ENCODE measurements at regions of chr20 and their contacts with region 1.

Region 1: DNA sequence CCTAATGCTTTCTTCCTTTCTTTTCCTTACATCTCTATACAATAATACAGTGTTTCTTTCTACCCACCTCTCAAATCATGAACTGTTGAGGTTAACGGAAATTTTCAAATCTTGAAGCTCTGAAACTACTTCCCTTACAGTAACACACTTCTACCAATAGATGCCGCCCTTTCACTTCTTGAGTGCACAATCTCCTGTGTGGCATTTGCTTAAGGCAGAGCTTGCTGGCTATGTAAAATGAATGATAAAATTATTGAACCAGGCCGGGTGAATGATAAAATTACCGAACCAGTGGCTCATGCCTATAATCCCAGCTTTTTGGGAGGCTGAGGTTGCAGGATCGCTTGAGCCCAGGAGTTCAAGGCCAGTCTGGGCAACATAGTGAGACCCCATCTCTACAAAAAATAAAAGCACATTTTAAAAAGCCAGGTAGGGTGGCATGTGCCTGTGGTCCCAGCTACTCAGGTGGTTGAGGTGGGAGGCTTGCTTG is 56.8 kb downstream of the KCNS1 start:
- DNase-seq: peak; percentile 82
- H3K4me3 ChIP-seq: no peak overlapping the region
- H3K27ac ChIP-seq: no peak overlapping the region
- H3K4me1 ChIP-seq: peaks cover 19% of the 10 kb centered on the region
- H3K27me3 ChIP-seq: no peaks in the 10 kb centered on the region
- CTCF ChIP-seq: peak; percentile 72 to 77
- POLR2A ChIP-seq: no peak

Region 2: GRCh38 chr20:44733341-44734069 is 310.6 kb before region 1 on chr20:
- CTCF ChIA-PET with region 1: no interaction called
- POLR2A ChIA-PET with region 1: no interaction called
- dilution Hi-C with region 1: no loop called
- intact Hi-C with region 1: no loop called
- DNase-seq: peak; percentile 74
- H3K4me3 ChIP-seq: no peak overlapping the region
- H3K27ac ChIP-seq: no peak overlapping the region
- H3K4me1 ChIP-seq: peaks cover 12% of the 10 kb centered on the region
- H3K27me3 ChIP-seq: no peaks in the 10 kb centered on the region
- CTCF ChIP-seq: peak; percentile 84 to 92
- POLR2A ChIP-seq: no peak

Region 3: DNA sequence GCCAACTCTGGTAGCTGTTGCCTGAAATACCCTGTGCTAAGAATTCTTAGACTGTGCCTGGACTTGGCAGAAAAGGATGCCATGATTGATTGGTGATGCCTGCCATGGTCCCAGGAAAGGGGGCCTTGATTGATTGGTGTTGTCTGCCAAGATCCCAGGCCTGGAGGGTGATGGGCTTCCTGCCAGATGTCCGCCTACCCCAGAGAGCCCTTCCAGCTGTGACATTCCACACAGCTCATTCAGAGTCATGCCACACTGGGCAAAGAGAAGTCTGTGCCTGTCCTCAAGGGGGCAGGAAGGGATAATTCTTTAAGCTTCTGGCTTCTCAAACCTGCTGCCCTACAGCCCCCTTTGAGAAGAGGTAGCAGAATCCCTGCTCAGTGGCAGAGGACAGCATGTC is 258.4 kb before region 1 on chr20:
- CTCF ChIA-PET with region 1: no interaction called
- POLR2A ChIA-PET with region 1: no interaction called
- dilution Hi-C with region 1: no loop called
- intact Hi-C with region 1: no loop called
- DNase-seq: no peak
- H3K4me3 ChIP-seq: no peak overlapping the region
- H3K27ac ChIP-seq: no peak overlapping the region
- H3K4me1 ChIP-seq: no peaks in the 10 kb centered on the region
- H3K27me3 ChIP-seq: peaks cover 0 to 2% of the 10 kb centered on the region in 2 experiments
- CTCF ChIP-seq: no peak
- POLR2A ChIP-seq: no peak

Region 4: DNA sequence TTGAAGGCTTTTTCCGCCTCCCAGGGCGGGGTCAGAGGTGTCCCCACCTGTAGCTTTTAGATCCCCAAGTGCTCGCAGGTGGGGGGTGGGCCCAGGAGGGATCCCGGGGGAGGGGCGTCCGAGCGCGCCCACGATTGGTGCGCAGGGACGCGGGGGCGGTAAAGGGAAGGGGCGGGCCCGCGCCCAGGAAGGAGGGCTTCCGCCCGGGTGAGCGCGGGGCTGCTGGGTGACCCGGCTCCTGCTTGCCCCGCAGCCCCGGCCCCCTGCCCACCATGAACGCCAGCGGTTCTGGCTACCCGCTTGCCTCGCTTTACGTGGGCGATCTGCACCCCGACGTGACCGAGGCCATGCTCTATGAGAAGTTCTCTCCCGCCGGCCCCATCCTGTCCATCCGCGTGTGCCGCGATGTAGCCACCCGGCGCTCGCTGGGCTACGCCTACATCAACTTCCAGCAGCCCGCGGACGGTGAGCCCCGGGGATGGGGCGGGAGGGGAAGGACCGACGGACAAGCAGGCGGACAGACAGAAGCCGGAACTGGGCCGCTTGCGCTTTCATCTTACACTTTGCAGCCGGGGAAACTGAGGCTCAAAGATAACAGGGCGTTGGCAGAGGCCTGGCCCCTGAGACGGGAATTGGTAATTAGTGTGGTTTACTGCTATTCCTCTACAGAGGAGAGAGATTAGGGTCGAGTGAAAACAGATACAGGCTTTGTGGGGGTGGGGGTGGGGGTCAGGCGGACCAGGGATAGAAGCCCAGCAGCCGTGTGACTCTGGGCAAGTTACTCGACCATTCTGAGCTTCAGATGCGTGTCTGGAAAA is 134.0 kb before region 1 on chr20 and contains the start of gene PABPC1L:
- CTCF ChIA-PET with region 1: no interaction called
- POLR2A ChIA-PET with region 1: no interaction called
- dilution Hi-C with region 1: no loop called
- intact Hi-C with region 1: loop called (anchors 1 kb)
- DNase-seq: no peak
- H3K4me3 ChIP-seq: peak within 1 kb of the TSS; percentile 43 to 62 (median 51)
- H3K27ac ChIP-seq: no peak within 1 kb of the TSS
- H3K4me1 ChIP-seq: peaks cover 12% of the 10 kb centered on the region
- H3K27me3 ChIP-seq: no peaks in the 10 kb centered on the region
- CTCF ChIP-seq: no peak
- POLR2A ChIP-seq: peak; percentile 47
- total RNA-seq, gene PABPC1L: 7.5 and 7.8 TPM in 2 replicates

Region 5: GRCh38 chr20:44945261-44945660 is 98.9 kb before region 1 on chr20:
- CTCF ChIA-PET with region 1: no interaction called
- POLR2A ChIA-PET with region 1: no interaction called
- dilution Hi-C with region 1: no loop called
- intact Hi-C with region 1: no loop called
- DNase-seq: no peak
- H3K4me3 ChIP-seq: no peak overlapping the region
- H3K27ac ChIP-seq: no peak overlapping the region
- H3K4me1 ChIP-seq: no peaks in the 10 kb centered on the region
- H3K27me3 ChIP-seq: no peaks in the 10 kb centered on the region
- CTCF ChIP-seq: no peak
- POLR2A ChIP-seq: no peak

Region 6: GRCh38 chr20:44993343-44993742 is 50.8 kb before region 1 on chr20:
- CTCF ChIA-PET with region 1: interaction called, 7 read pairs
- POLR2A ChIA-PET with region 1: no interaction called
- dilution Hi-C with region 1: no loop called
- intact Hi-C with region 1: loop called (anchors 1 kb)
- DNase-seq: peak; percentile 65
- H3K4me3 ChIP-seq: peak overlapping the region in 1 of 3 experiments; percentile 23
- H3K27ac ChIP-seq: peak overlapping the region; percentile 82
- H3K4me1 ChIP-seq: peaks cover 17% of the 10 kb centered on the region
- H3K27me3 ChIP-seq: no peaks in the 10 kb centered on the region
- CTCF ChIP-seq: no peak
- POLR2A ChIP-seq: peak; percentile 26

Region 7: GRCh38 chr20:45061244-45061643 is 17.1 kb after region 1 on chr20:
- CTCF ChIA-PET with region 1: interaction called, 46 read pairs
- POLR2A ChIA-PET with region 1: no interaction called
- dilution Hi-C with region 1: no loop called
- intact Hi-C with region 1: no loop called
- DNase-seq: peak; percentile 61
- H3K4me3 ChIP-seq: no peak overlapping the region
- H3K27ac ChIP-seq: no peak overlapping the region
- H3K4me1 ChIP-seq: peaks cover 13% of the 10 kb centered on the region
- H3K27me3 ChIP-seq: no peaks in the 10 kb centered on the region
- CTCF ChIP-seq: no peak
- POLR2A ChIP-seq: no peak

Region 8: DNA sequence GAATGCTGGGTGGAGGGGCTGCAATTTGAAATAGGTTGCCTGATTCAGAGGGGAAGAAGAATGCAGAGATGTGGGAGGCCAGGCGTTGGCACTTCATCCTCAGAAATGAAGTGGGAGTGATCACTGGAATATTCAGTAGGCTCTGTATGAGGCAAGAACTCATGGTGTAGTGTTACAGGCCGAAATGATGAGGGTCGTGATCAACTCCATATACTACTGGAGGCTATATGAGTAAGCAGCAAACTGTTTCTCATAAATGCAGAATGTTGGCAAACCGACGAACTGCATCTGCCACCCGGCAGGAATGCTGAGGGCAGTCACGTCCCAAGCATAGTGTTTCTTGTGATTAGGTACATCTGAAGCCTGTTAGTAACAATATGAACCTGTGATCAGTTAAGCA is 44.1 kb after region 1 on chr20:
- CTCF ChIA-PET with region 1: interaction called, 411 read pairs
- POLR2A ChIA-PET with region 1: no interaction called
- dilution Hi-C with region 1: no loop called
- intact Hi-C with region 1: no loop called
- DNase-seq: no peak
- H3K4me3 ChIP-seq: no peak overlapping the region
- H3K27ac ChIP-seq: no peak overlapping the region
- H3K4me1 ChIP-seq: no peaks in the 10 kb centered on the region
- H3K27me3 ChIP-seq: no peaks in the 10 kb centered on the region
- CTCF ChIP-seq: no peak
- POLR2A ChIP-seq: no peak

Region 9: GRCh38 chr20:45111799-45112471 is 67.8 kb after region 1 on chr20:
- CTCF ChIA-PET with region 1: interaction called, 278 read pairs
- POLR2A ChIA-PET with region 1: no interaction called
- dilution Hi-C with region 1: no loop called
- intact Hi-C with region 1: loop called (anchors 1 kb)
- DNase-seq: peak; percentile 26
- H3K4me3 ChIP-seq: no peak overlapping the region
- H3K27ac ChIP-seq: no peak overlapping the region
- H3K4me1 ChIP-seq: no peaks in the 10 kb centered on the region
- H3K27me3 ChIP-seq: peaks cover 0 to 4% of the 10 kb centered on the region in 2 experiments
- CTCF ChIP-seq: peak; percentile 47 to 51
- POLR2A ChIP-seq: no peak

Region 10: GRCh38 chr20:45283548-45284057 is 239.5 kb after region 1 on chr20:
- CTCF ChIA-PET with region 1: interaction called, 15 read pairs
- POLR2A ChIA-PET with region 1: no interaction called
- dilution Hi-C with region 1: no loop called
- intact Hi-C with region 1: no loop called
- DNase-seq: no peak
- H3K4me3 ChIP-seq: no peak overlapping the region
- H3K27ac ChIP-seq: no peak overlapping the region
- H3K4me1 ChIP-seq: no peaks in the 10 kb centered on the region
- H3K27me3 ChIP-seq: no peaks in the 10 kb centered on the region
- CTCF ChIP-seq: no peak
- POLR2A ChIP-seq: no peak

Measured in endothelial cell of umbilical vein (primary cell).